AG04450 (cell line): ENCODE measurements at regions of chr17 and their contacts with region 1.

Region 1: GRCh38 chr17:18960803-18961511 is 9.0 kb downstream of the SLC5A10 start:
- DNase-seq: no peak
- H3K4me3 ChIP-seq: no peak overlapping the region
- H3K27ac ChIP-seq: no peak overlapping the region
- H3K27me3 ChIP-seq: no peaks in the 10 kb centered on the region
- CTCF ChIP-seq: peak; percentile 91

Region 2: DNA sequence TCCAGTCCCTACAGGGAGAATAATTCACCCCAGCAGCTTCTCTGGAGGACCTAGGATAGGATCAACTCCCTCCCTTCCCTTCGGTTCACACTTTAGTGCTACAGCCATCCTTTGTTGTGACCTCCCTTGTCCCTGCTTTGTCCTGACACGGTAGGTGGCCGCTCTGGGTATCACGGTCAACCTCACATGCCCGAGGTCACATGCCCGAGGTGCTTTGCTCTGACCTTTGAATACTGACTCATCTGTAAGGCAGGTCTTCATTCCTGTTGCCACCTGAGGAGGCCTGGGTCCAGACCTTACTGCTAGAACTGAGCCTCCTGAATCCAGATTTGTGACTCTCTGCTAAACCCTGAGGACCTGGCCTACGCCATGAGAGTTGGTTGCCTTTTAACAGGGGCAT is 757.6 kb before region 1 on chr17:
- CTCF ChIA-PET with region 1: no interaction called
- POLR2A ChIA-PET with region 1: no interaction called
- DNase-seq: no peak
- H3K4me3 ChIP-seq: no peak overlapping the region
- H3K27ac ChIP-seq: no peak overlapping the region
- H3K27me3 ChIP-seq: no peaks in the 10 kb centered on the region
- CTCF ChIP-seq: no peak

Region 3: DNA sequence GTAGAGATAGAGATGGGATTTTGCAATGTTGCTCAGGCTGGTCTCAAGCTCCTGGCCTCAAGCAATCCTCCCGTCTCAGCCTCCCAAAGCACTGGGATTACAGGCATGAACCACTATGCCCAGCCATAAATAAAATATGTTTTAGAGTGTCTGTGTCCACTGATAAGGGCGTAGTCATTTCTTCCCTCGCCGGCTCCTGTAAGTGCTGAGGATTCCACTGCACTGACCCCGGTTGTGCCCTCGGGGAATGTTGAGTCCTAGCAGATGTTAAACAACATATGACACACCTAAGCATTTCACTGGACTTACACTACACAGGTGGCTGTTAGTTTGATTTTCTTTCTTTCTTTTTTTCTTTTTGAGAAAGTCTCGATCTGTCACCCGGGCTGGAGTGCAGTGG is 592.0 kb before region 1 on chr17:
- CTCF ChIA-PET with region 1: no interaction called
- POLR2A ChIA-PET with region 1: no interaction called
- DNase-seq: no peak
- H3K4me3 ChIP-seq: no peak overlapping the region
- H3K27ac ChIP-seq: no peak overlapping the region
- H3K27me3 ChIP-seq: peaks cover 4% of the 10 kb centered on the region
- CTCF ChIP-seq: no peak

Region 4: GRCh38 chr17:18916816-18917500 is 44.0 kb before region 1 on chr17:
- CTCF ChIA-PET with region 1: no interaction called
- POLR2A ChIA-PET with region 1: no interaction called
- DNase-seq: no peak
- H3K4me3 ChIP-seq: no peak overlapping the region
- H3K27ac ChIP-seq: no peak overlapping the region
- H3K27me3 ChIP-seq: no peaks in the 10 kb centered on the region
- CTCF ChIP-seq: no peak

Region 5: GRCh38 chr17:18949566-18949965 is 11.4 kb before region 1 on chr17:
- CTCF ChIA-PET with region 1: interaction called, 17 read pairs
- POLR2A ChIA-PET with region 1: no interaction called
- DNase-seq: no peak
- H3K4me3 ChIP-seq: no peak overlapping the region
- H3K27ac ChIP-seq: no peak overlapping the region
- H3K27me3 ChIP-seq: peaks cover 39% of the 10 kb centered on the region
- CTCF ChIP-seq: no peak

Region 6: GRCh38 chr17:19001907-19002590 is 41.1 kb after region 1 on chr17:
- CTCF ChIA-PET with region 1: interaction called, 13 read pairs
- POLR2A ChIA-PET with region 1: interaction called, 4 read pairs
- DNase-seq: no peak
- H3K4me3 ChIP-seq: peak overlapping the region; percentile 73
- H3K27ac ChIP-seq: no peak overlapping the region
- H3K27me3 ChIP-seq: no peaks in the 10 kb centered on the region
- CTCF ChIP-seq: no peak

Region 7: DNA sequence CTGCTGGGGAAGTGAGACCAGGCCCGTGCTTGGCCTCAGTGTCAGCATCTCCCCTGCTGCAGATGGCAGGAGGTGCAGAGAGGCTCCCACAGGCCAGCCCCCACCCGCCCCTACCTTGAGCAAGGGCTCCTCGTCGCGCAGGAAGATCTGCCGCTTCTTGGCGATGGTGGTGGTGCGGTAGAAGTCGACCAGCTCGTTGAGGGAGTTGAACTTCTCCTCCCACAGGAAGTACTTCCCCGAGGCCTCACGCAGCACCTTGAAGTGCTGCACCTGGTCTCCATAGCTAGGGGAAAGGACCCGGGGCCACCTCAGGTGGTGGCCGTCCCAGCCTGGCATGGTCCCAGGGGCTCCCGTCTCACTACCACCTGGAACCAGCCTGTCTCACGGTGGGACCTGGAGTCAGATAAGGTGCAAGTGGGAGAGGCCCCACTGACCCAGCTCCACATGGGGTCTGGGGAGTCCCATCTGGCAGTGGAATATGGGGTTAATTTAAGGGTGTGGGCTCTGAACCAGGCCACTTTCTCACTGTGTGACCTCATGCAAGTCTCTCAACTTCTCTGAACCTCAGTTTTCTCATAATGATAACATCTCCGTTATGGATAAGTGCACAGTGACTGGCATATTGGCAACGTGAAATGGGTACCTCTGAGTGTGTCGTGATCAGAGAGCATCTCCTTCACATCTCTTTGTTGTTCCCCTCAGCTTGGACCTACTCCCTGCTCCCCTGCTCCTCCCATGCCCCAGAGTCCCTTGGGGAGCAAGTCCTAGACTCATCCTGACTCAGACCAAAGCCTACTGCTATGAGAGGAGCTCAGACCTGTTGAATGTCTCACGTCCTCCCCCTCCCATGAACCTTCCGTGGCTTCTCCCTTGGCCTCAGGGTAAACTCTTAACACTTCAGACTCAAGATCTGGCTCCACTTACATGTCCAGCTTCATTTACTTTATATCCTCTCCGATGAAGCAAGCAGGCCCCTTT is 63.4 kb after region 1 on chr17:
- CTCF ChIA-PET with region 1: interaction called, 16 read pairs
- POLR2A ChIA-PET with region 1: no interaction called
- DNase-seq: no peak
- H3K4me3 ChIP-seq: no peak overlapping the region
- H3K27ac ChIP-seq: no peak overlapping the region
- H3K27me3 ChIP-seq: no peaks in the 10 kb centered on the region
- CTCF ChIP-seq: no peak